Left cardiac atrium (tissue), 4 donors: ENCODE measurements at regions of chr10 and their contacts with region 1.

Region 1: GRCh38 chr10:12337453-12338372 is 11.6 kb upstream of the CAMK1D start:
- DNase-seq: no peak
- ATAC-seq: no peak

Region 2: DNA sequence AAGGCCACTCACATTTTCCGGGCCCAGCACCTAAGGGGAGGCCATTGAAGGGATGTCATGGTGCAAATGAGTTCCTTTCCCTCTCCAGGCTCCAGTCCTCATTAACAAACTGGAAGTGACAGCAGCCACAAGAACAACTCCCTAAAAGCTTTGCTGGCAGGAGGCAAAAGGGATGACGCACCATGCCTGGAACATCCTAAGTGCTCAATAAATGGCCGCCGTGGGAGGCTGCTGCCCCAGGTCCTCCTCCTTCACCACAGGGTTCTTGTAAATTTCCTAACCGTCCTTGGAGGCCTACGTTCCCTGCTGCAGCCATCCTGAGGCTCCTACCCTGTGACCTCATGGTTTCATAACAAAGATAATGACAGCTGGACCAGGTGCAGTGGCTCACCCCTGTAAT is 29.7 kb before region 1 on chr10:
- intact Hi-C with region 1: loop called in 1 of 2 experiments (anchors 2 kb)
- DNase-seq: no peak
- ATAC-seq: no peak

Region 3: DNA sequence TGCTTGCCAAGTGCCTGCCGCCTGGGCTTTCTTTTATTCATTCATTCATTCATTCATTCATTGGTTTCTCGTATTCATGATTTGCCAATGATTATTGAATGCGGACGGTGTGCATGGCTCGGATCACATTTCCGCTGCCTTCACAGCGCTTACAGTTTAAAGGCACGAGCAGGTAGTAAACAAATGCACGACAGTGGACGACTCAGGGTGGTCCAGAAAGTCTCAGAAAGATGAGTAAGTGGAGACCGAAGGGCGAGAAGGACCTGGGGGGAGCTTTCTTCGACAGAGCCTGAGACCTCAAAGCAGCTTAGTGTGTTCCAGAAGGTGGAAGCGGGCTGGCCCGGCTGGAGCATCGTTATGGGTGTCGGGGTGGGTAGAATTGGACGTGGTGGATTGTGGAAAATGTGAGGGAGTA is 824.2 kb after region 1 on chr10:
- intact Hi-C with region 1: no loop called
- DNase-seq: no peak
- ATAC-seq: no peak